ENCODE measurements at regions of chr16 and their contacts with region 1.

Region 1: GRCh38 chr16:14513389-14514107 is 116.5 kb downstream of the PARN start:
- DNase-seq: no peak
- ATAC-seq: no peak
- H3K4me3 Mint-ChIP-seq: no peak overlapping the region
- H3K27ac Mint-ChIP-seq: no peak overlapping the region
- H3K4me1 Mint-ChIP-seq: no peaks in the 10 kb centered on the region
- H3K27me3 Mint-ChIP-seq: no peaks in the 10 kb centered on the region

Region 2: DNA sequence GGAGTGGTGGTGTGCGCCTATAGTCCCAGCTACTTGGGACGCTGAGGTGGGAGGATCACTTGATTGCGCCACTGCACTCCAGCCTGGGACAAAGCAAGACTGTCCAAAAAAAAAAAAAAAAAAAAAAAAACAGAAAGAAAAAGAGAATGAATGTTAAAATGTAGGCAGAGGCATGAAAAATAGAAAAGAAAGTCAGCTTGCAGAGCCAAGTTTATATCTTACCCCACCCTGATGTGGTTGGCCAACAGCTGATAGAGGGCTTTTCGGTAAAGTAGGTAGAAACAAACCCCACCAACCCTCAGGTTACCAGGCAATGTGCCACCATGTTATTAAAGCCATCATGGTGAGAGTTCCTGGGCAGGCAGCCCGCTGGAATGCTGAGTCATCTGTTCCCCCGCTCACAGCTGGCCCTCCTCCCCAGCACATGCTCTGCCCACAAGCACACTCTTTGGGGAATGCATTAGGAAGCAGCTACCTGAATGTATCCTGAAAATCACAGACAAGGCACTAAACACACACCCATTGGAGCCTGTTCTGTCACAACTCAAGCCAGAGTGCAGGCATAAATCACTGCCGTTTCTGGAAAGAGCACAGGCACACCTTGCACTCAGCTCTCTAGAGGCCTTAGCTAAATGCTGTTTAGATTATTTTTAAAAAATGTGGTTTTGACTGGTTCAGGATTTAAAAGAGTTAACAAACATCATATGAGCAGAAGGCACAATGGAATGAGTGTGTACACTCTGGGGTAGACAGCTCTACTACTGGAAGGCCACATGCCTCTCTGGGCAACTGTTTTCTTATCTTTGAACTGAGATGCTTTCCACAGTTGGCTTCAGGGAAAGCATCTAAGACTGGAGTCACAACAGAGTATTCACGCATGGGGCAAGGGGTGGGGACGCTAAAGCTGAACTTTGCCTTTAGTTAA is 12.0 kb before region 1 on chr16:
- CTCF ChIA-PET with region 1: interaction called, 3 read pairs
- POLR2A ChIA-PET with region 1: no interaction called
- intact Hi-C with region 1: loop called in 1 of 2 experiments (anchors 1 kb)
- DNase-seq: peak; percentile 17
- ATAC-seq: no peak
- H3K4me3 Mint-ChIP-seq: no peak overlapping the region
- H3K27ac Mint-ChIP-seq: no peak overlapping the region
- H3K4me1 Mint-ChIP-seq: peaks cover 25% of the 10 kb centered on the region
- H3K27me3 Mint-ChIP-seq: no peaks in the 10 kb centered on the region

Region 3: DNA sequence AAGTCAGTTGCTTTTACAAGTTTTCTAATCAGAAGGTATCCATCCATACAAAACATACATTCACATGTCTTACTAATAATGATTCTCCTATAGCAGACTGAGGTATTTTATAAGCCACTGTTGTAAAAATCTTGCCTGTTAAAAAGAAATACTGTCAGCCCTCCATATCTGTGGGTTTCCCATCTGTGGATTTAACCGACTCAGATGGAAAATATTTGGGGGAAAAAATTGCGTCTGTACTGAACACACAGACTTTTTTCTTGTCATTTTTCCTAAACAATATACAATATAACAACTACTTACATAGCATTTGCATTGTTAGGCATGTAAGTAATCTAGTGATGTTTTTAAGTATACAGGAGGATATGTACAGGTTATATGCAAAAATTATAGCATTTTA is 26.1 kb after region 1 on chr16:
- CTCF ChIA-PET with region 1: no interaction called
- POLR2A ChIA-PET with region 1: no interaction called
- intact Hi-C with region 1: no loop called
- DNase-seq: no peak
- ATAC-seq: no peak
- H3K4me3 Mint-ChIP-seq: no peak overlapping the region
- H3K27ac Mint-ChIP-seq: no peak overlapping the region
- H3K4me1 Mint-ChIP-seq: no peaks in the 10 kb centered on the region
- H3K27me3 Mint-ChIP-seq: no peaks in the 10 kb centered on the region

Region 4: GRCh38 chr16:14682121-14682520 is 168.6 kb after region 1 on chr16:
- CTCF ChIA-PET with region 1: no interaction called
- POLR2A ChIA-PET with region 1: no interaction called
- intact Hi-C with region 1: no loop called
- DNase-seq: no peak
- ATAC-seq: no peak
- H3K4me3 Mint-ChIP-seq: no peak overlapping the region
- H3K27ac Mint-ChIP-seq: no peak overlapping the region
- H3K4me1 Mint-ChIP-seq: no peaks in the 10 kb centered on the region
- H3K27me3 Mint-ChIP-seq: peaks cover 6% of the 10 kb centered on the region

Region 5: DNA sequence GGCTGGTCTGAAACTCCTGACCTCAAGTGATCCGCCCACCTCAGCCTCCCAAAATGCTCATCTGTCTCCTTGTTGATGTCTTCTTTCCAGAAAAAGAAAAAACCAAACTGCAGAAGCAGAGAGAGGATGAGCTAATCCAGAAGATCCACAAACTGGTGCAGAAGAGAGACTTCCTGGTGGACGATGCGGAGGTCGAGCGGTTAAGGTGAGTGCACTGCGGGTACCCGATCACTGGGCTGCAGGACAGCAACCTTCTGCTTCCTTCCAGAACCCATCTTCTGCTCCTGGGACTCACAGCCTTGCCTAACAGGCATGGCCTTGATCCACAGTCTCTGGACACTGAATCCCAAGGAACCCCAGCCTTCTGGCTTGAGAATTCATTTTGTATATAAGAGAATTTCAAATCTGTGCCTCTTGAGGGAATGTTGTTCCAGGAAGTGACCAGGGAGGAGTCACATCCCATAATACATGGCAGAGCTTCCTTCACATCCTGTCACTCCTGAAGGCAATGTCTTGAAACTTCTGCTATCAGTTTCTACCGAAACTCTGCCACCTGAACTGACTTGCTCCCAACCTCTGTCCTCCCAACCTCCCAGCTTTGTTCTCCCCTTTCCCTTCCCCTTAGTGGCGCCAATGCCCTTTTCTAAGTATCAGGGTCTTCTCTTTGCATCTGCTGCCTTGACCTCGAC is 1067.7 kb after region 1 on chr16:
- CTCF ChIA-PET with region 1: no interaction called
- POLR2A ChIA-PET with region 1: no interaction called
- intact Hi-C with region 1: no loop called
- DNase-seq: no peak
- ATAC-seq: no peak
- H3K4me3 Mint-ChIP-seq: no peak overlapping the region
- H3K27ac Mint-ChIP-seq: no peak overlapping the region
- H3K4me1 Mint-ChIP-seq: no peaks in the 10 kb centered on the region
- H3K27me3 Mint-ChIP-seq: no peaks in the 10 kb centered on the region